ENCODE measurements at regions of chr10 and their contacts with region 1.

Region 1: DNA sequence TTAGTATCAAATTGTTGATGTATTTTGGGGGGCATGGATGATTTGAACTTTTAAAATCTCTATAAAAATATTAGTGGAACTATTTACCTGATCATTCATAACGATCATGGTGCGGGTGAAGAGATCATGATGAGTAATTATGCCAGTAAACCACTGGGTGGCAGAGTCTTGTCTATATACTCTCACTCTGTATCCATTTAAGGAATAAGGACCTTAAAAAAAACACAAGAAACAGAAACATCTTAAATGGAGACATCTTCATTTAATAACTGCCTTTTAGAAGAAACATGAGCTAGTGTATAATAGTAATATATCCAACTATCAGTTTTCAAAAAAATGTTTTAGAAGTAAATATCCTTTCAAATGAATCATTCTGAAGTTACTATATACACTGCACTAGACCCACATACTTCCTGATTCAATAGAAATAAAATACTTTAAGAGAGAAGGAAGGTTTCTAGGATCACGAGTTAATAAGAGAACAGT is 84.0 kb downstream of the NRBF2 start:
- DNase-seq: peak; percentile 82
- H3K4me3 ChIP-seq: no peak overlapping the region
- H3K27ac ChIP-seq: peak overlapping the region; percentile 0; the same call in 1 of the 2 replicates
- H3K4me1 ChIP-seq: peaks cover 23% of the 10 kb centered on the region
- H3K27me3 ChIP-seq: no peaks in the 10 kb centered on the region

Region 2: DNA sequence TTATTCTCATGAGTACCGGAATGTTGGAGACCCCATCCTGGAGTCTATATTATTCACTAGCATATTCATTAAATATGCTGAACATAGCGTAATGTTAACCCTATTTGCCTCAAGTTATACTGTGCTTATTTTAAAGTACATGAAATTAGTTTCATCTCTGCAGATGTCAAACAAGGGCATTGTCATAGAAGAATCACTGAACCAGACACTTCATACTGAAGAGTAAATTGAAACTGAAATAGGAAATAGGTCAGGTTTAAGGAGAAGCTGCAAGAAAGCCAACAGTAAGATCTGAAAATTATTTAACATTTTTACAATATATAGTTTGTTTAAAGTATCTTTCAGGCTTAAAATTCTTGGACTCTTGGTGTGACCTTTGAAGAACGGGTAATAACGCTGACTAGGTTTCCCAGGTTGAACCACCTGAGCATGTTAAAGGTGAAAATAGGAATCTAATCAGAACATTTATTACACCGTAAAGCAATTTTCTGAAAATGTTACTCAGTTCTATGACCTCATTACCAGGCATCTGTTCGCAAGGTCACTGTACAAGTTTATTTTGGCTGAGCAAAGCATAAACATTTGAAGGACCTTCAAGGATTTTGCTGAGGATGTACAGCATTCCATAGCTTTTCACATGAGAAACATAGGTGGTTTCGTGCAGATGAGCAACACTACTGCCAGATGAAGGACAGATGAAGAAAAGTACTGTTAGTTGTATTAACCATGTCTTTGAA is 386.7 kb after region 1 on chr10:
- in situ Hi-C with region 1: loop called (anchors 25 kb)
- DNase-seq: no peak
- H3K4me3 ChIP-seq: no peak overlapping the region
- H3K27ac ChIP-seq: no peak overlapping the region
- H3K4me1 ChIP-seq: no peaks in the 10 kb centered on the region
- H3K27me3 ChIP-seq: no peaks in the 10 kb centered on the region

Measured in GM23248 (cell line).